Esophagus squamous epithelium (tissue), 5 donors: ENCODE measurements at regions of chr17 and their contacts with region 1.

Region 1: DNA sequence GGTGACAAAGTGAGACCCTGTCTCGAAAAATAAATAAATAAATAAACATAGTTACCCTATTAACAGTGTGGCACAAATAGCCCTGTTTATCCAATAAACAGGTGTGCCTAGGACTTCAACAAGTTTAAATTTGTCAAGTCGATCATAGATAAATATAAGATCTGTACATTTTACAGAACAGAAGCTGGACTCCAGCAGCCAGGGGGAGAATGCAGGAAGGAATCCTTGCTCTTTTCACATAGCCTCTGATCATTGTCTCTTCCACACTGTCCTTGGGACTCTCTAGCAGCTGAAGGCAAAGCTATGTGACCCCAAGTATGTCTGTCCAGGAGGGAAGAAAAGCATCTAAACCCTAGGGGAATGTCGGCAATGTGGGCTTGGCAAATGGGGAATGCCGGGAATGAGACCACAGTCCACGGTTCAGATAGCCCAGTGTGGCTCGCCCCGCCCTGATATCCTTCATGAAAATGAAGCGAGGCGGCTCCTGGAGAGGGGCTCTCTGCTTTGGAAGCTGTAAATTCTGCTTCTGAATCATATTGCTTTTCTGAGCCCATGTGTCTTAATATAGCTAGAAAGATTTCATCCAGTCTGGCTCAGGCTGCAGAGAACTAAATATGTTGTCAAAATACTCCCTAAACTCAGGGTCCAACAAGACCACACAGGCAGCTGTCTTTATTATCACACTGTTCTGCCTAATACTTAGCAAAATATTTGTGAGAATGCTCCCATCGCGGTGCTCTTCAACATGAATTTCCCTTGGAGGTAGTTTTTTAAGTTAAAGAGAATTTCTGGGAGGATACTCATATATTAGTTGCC is 24.9 kb upstream of the GRB2 start:
- DNase-seq: no peak
- H3K4me3 ChIP-seq: no peak overlapping the region
- H3K27ac ChIP-seq: peak overlapping the region in 2 of 4 donors; percentile 60 to 80
- H3K4me1 ChIP-seq: peaks cover 13 to 52% (median 14%) of the 10 kb centered on the region in 3 donors
- H3K27me3 ChIP-seq: no peaks in the 10 kb centered on the region
- CTCF ChIP-seq: no peak
- POLR2A ChIP-seq: no peak

Region 2: DNA sequence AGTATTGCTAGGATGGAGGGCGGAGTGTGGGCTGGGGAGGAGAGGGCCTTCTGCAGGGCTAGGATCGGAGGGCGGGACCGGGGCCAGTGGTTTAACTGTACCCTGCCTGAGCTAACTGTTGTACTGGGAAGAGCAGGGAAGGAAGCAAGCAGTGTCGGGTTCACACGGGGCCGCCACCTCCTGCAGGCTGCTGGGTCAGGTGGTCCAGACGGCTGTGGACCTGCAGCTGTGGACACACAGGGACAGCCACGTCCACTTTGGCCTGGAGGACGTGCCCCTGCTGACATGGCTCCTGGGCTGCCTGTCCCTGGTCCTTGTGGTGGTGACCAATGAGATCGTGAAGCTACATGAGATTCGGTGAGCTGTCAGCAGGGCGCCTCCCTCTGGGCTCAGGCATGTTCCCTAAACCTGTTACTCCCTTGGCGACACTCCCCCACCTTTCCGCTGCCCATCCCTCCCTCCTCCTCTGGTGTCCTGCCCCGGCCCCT is 68.4 kb after region 1 on chr17:
- intact Hi-C with region 1: loop called (anchors 10 kb)
- DNase-seq: no peak
- H3K4me3 ChIP-seq: no peak overlapping the region
- H3K27ac ChIP-seq: peak overlapping the region in 3 of 4 donors; percentile 39 to 48 (median 48)
- H3K4me1 ChIP-seq: peaks cover 0 to 48% (median 0%) of the 10 kb centered on the region in 3 donors
- H3K27me3 ChIP-seq: no peaks in the 10 kb centered on the region
- CTCF ChIP-seq: no peak
- POLR2A ChIP-seq: no peak

Region 3: DNA sequence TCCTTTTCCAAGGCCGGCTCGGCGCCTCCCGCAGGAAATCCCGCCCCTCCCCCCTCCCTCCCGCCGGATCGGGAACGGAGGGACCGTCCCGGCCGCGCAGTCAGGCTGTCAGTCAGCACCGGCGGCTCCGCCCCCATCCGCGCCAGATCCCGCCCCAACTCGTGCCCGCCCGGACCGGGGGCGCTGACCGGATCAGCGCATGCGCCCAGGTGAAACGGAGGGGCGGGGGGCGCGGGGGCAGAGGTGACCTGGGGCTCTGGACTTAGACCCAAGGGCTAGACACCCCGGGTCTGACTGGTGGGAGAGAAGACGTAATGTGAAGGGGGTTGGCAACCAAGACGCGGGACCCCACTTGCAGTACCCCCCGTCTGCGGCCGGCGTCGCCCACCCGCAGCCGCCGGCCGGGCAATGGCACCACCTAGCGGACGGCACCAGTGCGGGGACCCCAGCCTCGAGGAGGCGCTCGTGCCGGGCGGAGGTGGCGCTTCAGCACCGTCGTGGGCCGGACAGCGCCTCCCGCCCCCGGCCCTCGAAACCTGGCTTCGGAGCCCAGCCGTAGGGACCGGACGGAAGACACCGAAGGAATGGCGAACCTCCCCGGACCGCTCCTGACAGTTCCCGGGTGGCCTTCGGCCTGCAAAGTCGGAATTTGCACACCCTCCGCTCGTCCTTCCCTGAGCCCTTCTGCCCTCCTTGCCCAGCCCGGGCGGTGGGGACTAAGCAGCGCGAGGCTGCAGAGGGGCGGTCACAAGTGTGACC is 85.3 kb after region 1 on chr17 and contains the start of gene CASKIN2:
- intact Hi-C with region 1: loop called (anchors 5 kb)
- DNase-seq: peak; percentile 33
- H3K4me3 ChIP-seq: peak within 1 kb of the TSS; percentile 73 to 98 (median 92)
- H3K27ac ChIP-seq: peak within 1 kb of the TSS; percentile 90 to 95 (median 92)
- H3K4me1 ChIP-seq: peaks cover 39 to 80% (median 47%) of the 10 kb centered on the region in 3 donors
- H3K27me3 ChIP-seq: no peaks in the 10 kb centered on the region
- CTCF ChIP-seq: peak; percentile 94 to 99 (median 98)
- POLR2A ChIP-seq: no peak
- total RNA-seq, gene CASKIN2: 9.5 to 12.2 (median 10.4) TPM

Region 4: GRCh38 chr17:75589012-75589918 is 158.9 kb after region 1 on chr17:
- intact Hi-C with region 1: loop called (anchors 10 kb)
- DNase-seq: peak; percentile 69
- H3K4me3 ChIP-seq: peak overlapping the region; percentile 34 to 82 (median 65)
- H3K27ac ChIP-seq: peak overlapping the region; percentile 78 to 97 (median 93)
- H3K4me1 ChIP-seq: peaks cover 14 to 40% (median 16%) of the 10 kb centered on the region in 3 donors
- H3K27me3 ChIP-seq: peaks cover 0 to 15% (median 0%) of the 10 kb centered on the region in 4 donors
- CTCF ChIP-seq: peak; percentile 58 to 95 (median 88)
- POLR2A ChIP-seq: peak in 2 of 4 donors; percentile 66 to 79